CD4-positive, alpha-beta memory T cell (primary cell): ENCODE measurements at regions of chr3 and their contacts with region 1.

Region 1: GRCh38 chr3:149129326-149130205 is at the start of gene HPS3:
- DNase-seq: peak; percentile 78 to 83 (median 80)
- H3K4me3 ChIP-seq: peak within 1 kb of the TSS; percentile 74 to 87
- H3K4me3 Mint-ChIP-seq: peak within 1 kb of the TSS; percentile 92 to 99 (median 96)
- H3K27ac ChIP-seq: peak within 1 kb of the TSS; percentile 65
- H3K27ac Mint-ChIP-seq: peak within 1 kb of the TSS; percentile 91 to 97 (median 93)
- H3K4me1 ChIP-seq: peaks cover 36% of the 10 kb centered on the region
- H3K4me1 Mint-ChIP-seq: peaks cover 39 to 52% (median 42%) of the 10 kb centered on the region in 4 donors
- H3K27me3 ChIP-seq: no peaks in the 10 kb centered on the region
- H3K27me3 Mint-ChIP-seq: peaks cover 4 to 6% of the 10 kb centered on the region in 2 donors
- total RNA-seq, gene HPS3: 32.5 to 33.0 TPM

Region 2: DNA sequence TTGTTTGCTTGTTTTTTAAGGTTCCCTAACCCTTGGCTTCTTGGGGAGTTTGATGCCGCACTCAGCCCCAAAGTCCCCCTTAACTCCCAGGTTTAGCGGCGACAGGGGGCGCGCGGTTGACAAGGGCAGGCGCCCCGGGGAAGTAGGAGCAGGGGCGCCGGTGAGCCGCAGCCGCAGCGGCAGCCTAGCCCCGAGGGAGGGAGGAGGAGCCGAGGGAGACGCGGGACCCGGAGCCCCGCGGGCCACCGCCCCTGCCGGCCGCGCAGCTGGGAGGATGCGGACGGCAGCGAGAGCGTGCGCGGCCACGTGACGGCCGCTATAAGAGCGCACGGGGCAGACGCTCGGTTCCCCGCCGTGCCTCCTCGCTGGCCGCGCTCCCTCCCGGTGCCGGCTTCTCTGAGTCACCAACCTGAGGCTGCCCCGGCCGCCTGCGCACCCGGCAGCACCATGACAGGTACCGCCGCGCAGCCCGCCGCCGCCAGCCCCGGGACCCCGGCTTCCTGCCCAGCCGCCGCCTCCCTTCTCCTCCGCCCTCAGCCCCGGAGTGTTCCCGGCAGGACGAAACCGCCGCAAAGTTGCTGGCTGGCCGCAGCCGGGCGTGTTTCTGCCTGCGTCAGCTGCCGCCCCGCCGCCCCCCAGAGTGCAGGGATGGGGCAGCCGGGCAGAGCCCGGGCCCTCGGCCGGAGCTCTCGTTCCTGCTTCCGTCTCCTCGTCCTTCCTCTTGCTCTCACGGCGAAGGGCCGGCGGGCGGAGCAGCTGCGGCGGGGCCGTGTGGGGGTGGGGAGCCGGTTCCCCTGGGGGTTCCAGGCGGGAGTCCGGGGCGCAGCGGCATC is 138.2 kb before region 1 on chr3 and contains the start of gene GYG1:
- CTCF ChIA-PET with region 1: interaction called, 3 read pairs
- POLR2A ChIA-PET with region 1: interaction called, 25 read pairs
- intact Hi-C with region 1: loop called (anchors 2 kb)
- DNase-seq: peak; percentile 76 to 87 (median 83)
- H3K4me3 ChIP-seq: peak within 1 kb of the TSS; percentile 49 to 56
- H3K4me3 Mint-ChIP-seq: peak within 1 kb of the TSS; percentile 84 to 92 (median 88)
- H3K27ac ChIP-seq: peak within 1 kb of the TSS; percentile 66
- H3K27ac Mint-ChIP-seq: peak within 1 kb of the TSS; percentile 79 to 93 (median 91)
- H3K4me1 ChIP-seq: peaks cover 27% of the 10 kb centered on the region
- H3K4me1 Mint-ChIP-seq: peaks cover 21 to 42% (median 27%) of the 10 kb centered on the region in 4 donors
- H3K27me3 ChIP-seq: no peaks in the 10 kb centered on the region
- H3K27me3 Mint-ChIP-seq: no peaks in the 10 kb centered on the region
- total RNA-seq, gene GYG1: 20.9 to 24.1 TPM

Region 3: GRCh38 chr3:149174901-149175300 is 45.3 kb after region 1 on chr3:
- CTCF ChIA-PET with region 1: no interaction called
- POLR2A ChIA-PET with region 1: no interaction called
- intact Hi-C with region 1: no loop called
- DNase-seq: peak in 2 of 5 donors; percentile 4 to 5
- H3K4me3 ChIP-seq: no peak overlapping the region
- H3K4me3 Mint-ChIP-seq: no peak overlapping the region
- H3K27ac ChIP-seq: no peak overlapping the region
- H3K27ac Mint-ChIP-seq: no peak overlapping the region
- H3K4me1 ChIP-seq: peaks cover 4% of the 10 kb centered on the region
- H3K4me1 Mint-ChIP-seq: peaks cover 0 to 6% (median 6%) of the 10 kb centered on the region in 4 donors
- H3K27me3 ChIP-seq: no peaks in the 10 kb centered on the region
- H3K27me3 Mint-ChIP-seq: no peaks in the 10 kb centered on the region

Region 4: GRCh38 chr3:149273096-149273751 is 143.7 kb after region 1 on chr3:
- CTCF ChIA-PET with region 1: interaction called, 24 read pairs
- POLR2A ChIA-PET with region 1: interaction called, 21 read pairs
- intact Hi-C with region 1: no loop called
- DNase-seq: peak in 4 of 5 donors; percentile 58 to 69 (median 62)
- H3K4me3 ChIP-seq: no peak overlapping the region
- H3K4me3 Mint-ChIP-seq: no peak overlapping the region
- H3K27ac ChIP-seq: no peak overlapping the region
- H3K27ac Mint-ChIP-seq: no peak overlapping the region
- H3K4me1 ChIP-seq: peaks cover 17% of the 10 kb centered on the region
- H3K4me1 Mint-ChIP-seq: peaks cover 13 to 15% (median 14%) of the 10 kb centered on the region in 4 donors
- H3K27me3 ChIP-seq: no peaks in the 10 kb centered on the region
- H3K27me3 Mint-ChIP-seq: no peaks in the 10 kb centered on the region